Stomach (tissue), 19 donors: ENCODE measurements at regions of chr2 and their contacts with region 1.

Region 1: GRCh38 chr2:189276277-189276676 is 96.7 kb upstream of the COL5A2 start:
- DNase-seq: peak in 1 of 2 donors; percentile 47
- H3K4me3 ChIP-seq: no peak overlapping the region
- H3K27ac ChIP-seq: no peak overlapping the region
- H3K4me1 ChIP-seq: no peaks in the 10 kb centered on the region
- H3K27me3 ChIP-seq: no peaks in the 10 kb centered on the region
- CTCF ChIP-seq: no peak
- EP300 ChIP-seq: no peak
- POLR2A ChIP-seq: no peak

Region 2: GRCh38 chr2:189150033-189150432 is 126.2 kb before region 1 on chr2:
- intact Hi-C with region 1: loop called (anchors 10 kb)
- DNase-seq: peak in 1 of 2 donors; percentile 38
- H3K4me3 ChIP-seq: no peak overlapping the region
- H3K27ac ChIP-seq: peak overlapping the region in 1 of 5 donors; percentile 31
- H3K4me1 ChIP-seq: peaks cover 0 to 28% (median 10%) of the 10 kb centered on the region in 4 donors
- H3K27me3 ChIP-seq: no peaks in the 10 kb centered on the region
- CTCF ChIP-seq: no peak
- EP300 ChIP-seq: no peak
- POLR2A ChIP-seq: no peak

Region 3: GRCh38 chr2:189221853-189222772 is 54.2 kb before region 1 on chr2:
- intact Hi-C with region 1: no loop called
- DNase-seq: peak; percentile 75 to 84
- H3K4me3 ChIP-seq: no peak overlapping the region
- H3K27ac ChIP-seq: peak overlapping the region; percentile 10 to 73 (median 68)
- H3K4me1 ChIP-seq: peaks cover 0 to 20% (median 11%) of the 10 kb centered on the region in 4 donors
- H3K27me3 ChIP-seq: no peaks in the 10 kb centered on the region
- CTCF ChIP-seq: no peak
- EP300 ChIP-seq: no peak
- POLR2A ChIP-seq: no peak